ENCODE measurements at regions of chr20 and their contacts with region 1.

Region 1: GRCh38 chr20:52150440-52151258 is 40.9 kb downstream of the ZFP64 start:
- DNase-seq: peak; percentile 9
- H3K4me3 ChIP-seq: no peak overlapping the region
- H3K27me3 ChIP-seq: no peaks in the 10 kb centered on the region
- CTCF ChIP-seq: peak; percentile 84

Region 2: DNA sequence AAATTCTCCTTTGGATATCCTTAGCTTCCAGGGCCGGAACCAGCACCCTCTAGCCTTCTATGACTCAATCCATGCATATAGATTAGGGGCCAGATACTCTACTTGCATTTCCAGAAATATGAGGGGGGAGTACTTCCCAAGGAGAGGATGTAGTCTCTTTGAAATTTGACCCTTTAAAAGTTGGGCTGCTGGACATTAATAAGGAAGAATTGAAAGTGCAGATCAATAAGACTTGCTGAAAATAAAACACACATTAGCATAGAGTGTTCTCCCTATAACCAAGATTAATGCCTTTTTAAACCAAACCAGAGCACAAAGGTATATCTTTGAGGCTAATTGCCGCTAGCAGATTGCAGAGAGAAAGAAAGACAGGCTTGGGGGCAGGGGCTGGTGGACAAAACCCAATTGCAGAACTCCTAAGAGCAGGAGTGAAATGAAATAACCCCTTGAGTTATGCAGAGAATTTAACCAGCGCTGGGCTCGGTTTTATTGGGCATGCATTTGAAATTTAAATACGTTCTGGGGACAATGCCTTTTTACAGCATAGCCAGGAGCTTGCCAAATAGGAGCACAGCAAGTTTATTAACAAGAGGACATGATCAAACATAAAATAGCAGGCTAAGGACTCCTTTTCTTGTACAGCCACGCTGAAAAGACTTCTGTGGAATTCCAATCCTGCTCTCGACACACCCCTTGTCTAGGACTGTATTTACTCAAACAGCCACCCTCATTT is 240.2 kb before region 1 on chr20:
- CTCF ChIA-PET with region 1: no interaction called
- POLR2A ChIA-PET with region 1: no interaction called
- DNase-seq: peak; percentile 70
- H3K4me3 ChIP-seq: no peak overlapping the region
- H3K27me3 ChIP-seq: no peaks in the 10 kb centered on the region; the same call in 1 of the 2 replicates
- CTCF ChIP-seq: no peak

Region 3: DNA sequence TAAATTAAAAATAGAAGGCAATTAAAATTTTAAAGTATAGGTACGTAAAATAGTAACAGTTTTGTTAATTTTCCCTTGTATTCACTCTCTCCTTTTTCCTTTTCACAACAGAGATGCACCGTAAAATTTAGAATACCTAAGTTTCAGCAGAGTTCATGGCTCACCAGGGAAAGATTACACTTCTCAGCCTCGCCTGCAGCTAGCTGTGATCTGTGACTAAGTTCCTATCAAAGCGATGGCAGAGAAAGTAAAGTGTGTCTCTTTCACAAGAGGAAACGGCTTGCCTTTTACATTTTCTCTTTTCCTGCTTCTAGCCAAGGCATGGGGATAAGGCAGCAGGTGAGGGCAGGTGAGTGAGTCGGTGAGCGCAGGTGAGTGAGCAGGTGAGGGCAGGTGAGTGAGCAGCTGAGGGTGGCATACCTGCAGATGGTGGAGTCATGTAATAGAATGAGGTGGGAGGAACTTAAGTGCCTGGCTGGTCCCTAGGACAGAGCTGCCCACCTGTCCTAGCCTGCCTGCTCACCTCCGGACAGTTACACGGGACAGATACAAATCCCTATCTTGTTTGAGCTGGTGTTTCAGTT is 10.1 kb after region 1 on chr20:
- CTCF ChIA-PET with region 1: interaction called, 11 read pairs
- POLR2A ChIA-PET with region 1: no interaction called
- DNase-seq: no peak
- H3K4me3 ChIP-seq: no peak overlapping the region
- H3K27me3 ChIP-seq: no peaks in the 10 kb centered on the region
- CTCF ChIP-seq: no peak

Region 4: GRCh38 chr20:52179331-52180179 is 28.9 kb after region 1 on chr20:
- CTCF ChIA-PET with region 1: no interaction called
- POLR2A ChIA-PET with region 1: no interaction called
- DNase-seq: no peak
- H3K4me3 ChIP-seq: no peak overlapping the region
- H3K27me3 ChIP-seq: no peaks in the 10 kb centered on the region
- CTCF ChIP-seq: no peak